Gastrocnemius medialis (tissue), 4 donors: ENCODE measurements at regions of chr10 and their contacts with region 1.

Region 1: GRCh38 chr10:43689955-43690771 is 41.5 kb upstream of the ZNF32 start:
- DNase-seq: peak; percentile 55 to 68
- ATAC-seq: peak; percentile 96 to 97
- H3K4me3 ChIP-seq: peak overlapping the region; percentile 55 to 91 (median 71)
- H3K27ac ChIP-seq: peak overlapping the region; percentile 68 to 85 (median 80)
- H3K4me1 ChIP-seq: peaks cover 0 to 8% of the 10 kb centered on the region in 2 donors
- H3K27me3 ChIP-seq: no peaks in the 10 kb centered on the region
- CTCF ChIP-seq: peak; percentile 81 to 95 (median 91)
- POLR2A ChIP-seq: peak in 1 of 2 donors; percentile 10

Region 2: DNA sequence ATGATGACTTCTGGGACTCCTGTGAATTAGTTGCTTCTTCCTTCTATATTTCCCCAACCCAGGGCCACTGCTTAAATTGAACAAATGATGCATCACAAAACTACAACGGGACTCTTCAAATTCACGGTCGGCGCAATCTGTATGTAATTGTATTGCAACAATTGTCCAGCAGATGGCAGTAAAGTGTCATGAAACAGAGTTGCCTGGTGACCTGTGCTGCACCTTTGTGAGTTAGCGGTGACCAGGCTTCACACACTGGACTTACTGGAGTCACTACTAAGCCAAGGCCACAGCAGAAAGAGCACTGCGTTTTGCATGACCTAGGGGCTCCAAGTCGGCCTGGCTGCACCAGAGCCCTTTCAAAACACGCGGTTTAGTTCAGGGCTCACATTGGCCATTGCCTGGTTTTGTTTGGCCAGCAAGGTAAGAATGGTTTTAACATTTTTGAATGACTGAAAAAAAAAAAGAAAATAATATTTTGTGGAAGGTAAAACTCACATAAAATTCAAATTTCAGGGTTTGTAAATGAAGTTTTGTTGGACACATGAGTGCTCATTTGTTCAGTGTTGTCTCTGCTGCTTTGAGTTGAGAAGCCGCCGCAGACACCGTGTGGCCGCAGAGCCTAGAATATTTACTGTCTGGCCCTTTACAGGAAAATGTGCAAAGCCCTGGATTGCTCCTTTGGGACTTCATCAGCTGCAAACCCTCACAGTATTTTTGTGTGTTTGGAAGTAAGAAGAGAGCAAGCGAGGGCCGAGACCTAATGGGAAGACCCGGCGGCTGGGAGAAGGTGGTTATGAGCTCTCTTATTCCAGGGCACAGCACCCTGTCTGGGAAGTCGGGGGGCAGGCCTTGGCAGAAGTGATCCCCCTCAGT is 18.3 kb before region 1 on chr10:
- in situ Hi-C with region 1: no loop called
- intact Hi-C with region 1: no loop called
- DNase-seq: peak; percentile 14 to 44
- ATAC-seq: peak; percentile 73 to 83
- H3K4me3 ChIP-seq: no peak overlapping the region
- H3K27ac ChIP-seq: no peak overlapping the region
- H3K4me1 ChIP-seq: no peaks in the 10 kb centered on the region
- H3K27me3 ChIP-seq: peaks cover 8 to 16% (median 8%) of the 10 kb centered on the region in 3 donors
- CTCF ChIP-seq: peak; percentile 76 to 88 (median 82)
- POLR2A ChIP-seq: no peak

Region 3: DNA sequence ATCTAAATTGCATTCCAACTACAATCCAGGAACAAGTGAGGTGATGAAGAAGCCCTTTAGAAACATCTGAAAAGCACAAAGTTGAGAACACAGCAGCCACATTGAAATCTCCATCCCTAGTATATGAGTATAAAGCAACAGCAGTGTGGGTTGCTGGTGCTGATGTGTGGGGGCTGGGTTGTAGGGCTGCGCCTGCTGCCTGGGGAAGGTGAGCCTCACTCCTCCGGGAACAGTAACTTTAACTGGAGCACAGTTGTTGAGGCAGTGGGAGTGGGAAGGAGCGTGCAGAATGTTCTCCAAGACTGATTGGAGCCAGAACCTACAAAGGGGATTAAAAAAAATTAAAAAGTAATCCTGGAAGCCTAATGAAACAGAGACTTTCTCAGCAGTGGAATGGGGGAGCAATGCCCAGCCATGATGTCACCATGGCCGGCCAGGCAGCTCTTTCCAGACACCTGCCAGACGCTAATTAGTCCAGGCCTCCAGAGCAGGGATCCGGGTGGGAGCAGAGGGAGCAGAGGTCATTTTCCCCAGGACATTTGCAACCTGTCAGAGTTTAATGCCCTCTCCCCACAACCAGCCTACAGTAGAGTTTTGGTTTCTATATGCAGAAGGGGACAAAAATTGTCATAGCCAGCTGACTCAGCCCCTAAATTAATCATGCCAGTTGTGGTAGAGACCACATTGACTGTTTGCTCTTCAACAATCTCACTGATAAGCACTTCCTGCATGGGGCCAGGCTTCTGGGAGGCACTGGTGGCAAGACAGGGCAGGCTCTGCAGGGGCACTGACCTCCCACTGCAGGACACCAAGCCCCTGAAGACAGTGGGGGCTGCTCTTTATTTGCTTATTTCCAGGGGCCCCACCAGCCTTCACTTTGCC is 91.6 kb after region 1 on chr10:
- in situ Hi-C with region 1: no loop called
- intact Hi-C with region 1: loop called (anchors 10 kb)
- DNase-seq: no peak
- ATAC-seq: no peak
- H3K4me3 ChIP-seq: no peak overlapping the region
- H3K27ac ChIP-seq: no peak overlapping the region
- H3K4me1 ChIP-seq: no peaks in the 10 kb centered on the region
- H3K27me3 ChIP-seq: no peaks in the 10 kb centered on the region
- CTCF ChIP-seq: no peak
- POLR2A ChIP-seq: no peak

Region 4: DNA sequence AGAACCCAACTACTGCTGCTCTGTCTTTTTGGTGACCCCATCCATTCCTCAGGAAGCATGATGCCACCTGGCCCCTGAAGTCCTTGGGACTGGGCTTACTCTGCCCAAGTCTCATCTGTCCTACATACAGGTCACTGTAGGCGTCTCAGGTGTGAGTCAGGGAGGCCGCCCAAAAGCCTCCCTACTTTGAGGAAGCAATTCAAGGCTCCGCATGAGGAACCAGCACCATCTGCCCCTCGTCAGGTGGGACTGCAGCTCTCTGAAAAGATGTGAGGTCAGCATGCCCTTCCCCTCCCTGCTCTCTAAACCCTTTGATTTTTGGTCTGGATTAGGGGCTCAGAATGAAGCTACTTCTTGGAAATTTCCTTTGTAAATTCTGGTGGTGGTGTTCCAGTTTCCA is 340.0 kb after region 1 on chr10:
- in situ Hi-C with region 1: loop called in 1 of 4 experiments (anchors 25 kb)
- intact Hi-C with region 1: no loop called
- DNase-seq: no peak
- ATAC-seq: no peak
- H3K4me3 ChIP-seq: no peak overlapping the region
- H3K27ac ChIP-seq: peak overlapping the region in 1 of 4 donors; percentile 22
- H3K4me1 ChIP-seq: no peaks in the 10 kb centered on the region
- H3K27me3 ChIP-seq: no peaks in the 10 kb centered on the region
- CTCF ChIP-seq: no peak
- POLR2A ChIP-seq: no peak

Region 5: GRCh38 chr10:44310762-44311562 is 620.8 kb after region 1 on chr10:
- in situ Hi-C with region 1: no loop called
- intact Hi-C with region 1: loop called (anchors 5 kb)
- DNase-seq: peak; percentile 80 to 88
- ATAC-seq: peak; percentile 73 to 83
- H3K4me3 ChIP-seq: peak overlapping the region; percentile 27 to 62 (median 36)
- H3K27ac ChIP-seq: peak overlapping the region in 3 of 4 donors; percentile 21 to 39 (median 35)
- H3K4me1 ChIP-seq: peaks cover 0 to 8% of the 10 kb centered on the region in 2 donors
- H3K27me3 ChIP-seq: no peaks in the 10 kb centered on the region
- CTCF ChIP-seq: peak; percentile 85 to 97 (median 93)
- POLR2A ChIP-seq: no peak

Region 6: DNA sequence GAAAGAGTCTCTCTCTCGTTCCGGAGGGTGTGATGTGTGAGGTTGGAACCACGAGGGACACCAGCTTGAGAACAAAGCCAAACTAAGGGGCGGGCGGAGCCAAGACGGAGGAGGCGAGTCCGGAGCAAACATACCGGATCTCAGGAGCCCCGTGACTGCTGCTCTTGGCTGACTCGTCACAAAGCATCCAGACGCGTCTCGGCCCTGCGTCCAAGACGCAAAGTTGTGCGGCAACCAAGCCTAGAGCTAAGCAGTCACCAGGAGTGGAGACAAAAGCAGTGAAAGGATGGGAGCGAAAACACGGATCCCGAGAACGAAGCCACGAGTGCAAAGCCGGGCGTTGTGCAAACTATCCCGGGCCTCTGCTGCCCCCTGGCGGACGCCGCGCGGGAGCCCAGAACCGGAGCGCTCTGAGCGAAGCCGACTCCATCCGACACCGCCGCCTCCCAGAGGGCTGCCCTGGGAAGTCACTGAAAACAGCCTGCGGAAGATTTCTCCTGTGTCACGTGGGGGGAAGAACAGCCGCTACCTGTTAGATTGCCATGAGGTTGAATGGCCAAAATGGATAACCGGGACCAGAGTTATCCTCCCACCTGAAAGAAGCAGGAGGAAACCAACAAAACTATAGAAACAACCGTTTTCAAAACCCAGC is 1174.6 kb after region 1 on chr10:
- in situ Hi-C with region 1: no loop called
- intact Hi-C with region 1: loop called (anchors 5 kb)
- DNase-seq: peak; percentile 71 to 78
- ATAC-seq: peak; percentile 91 to 94
- H3K4me3 ChIP-seq: peak overlapping the region; percentile 51 to 64 (median 60)
- H3K27ac ChIP-seq: peak overlapping the region; percentile 36 to 65 (median 56)
- H3K4me1 ChIP-seq: peaks cover 0 to 9% of the 10 kb centered on the region in 2 donors
- H3K27me3 ChIP-seq: peaks cover 0 to 6% (median 0%) of the 10 kb centered on the region in 3 donors
- CTCF ChIP-seq: peak; percentile 86 to 98 (median 95)
- POLR2A ChIP-seq: no peak